Upper lobe of right lung (tissue), 1 donor: ENCODE measurements at regions of chr3 and their contacts with region 1.

Region 1: GRCh38 chr3:9384141-9384853 is 13.1 kb upstream of the SETD5 start:
- DNase-seq: no peak
- ATAC-seq: peak; percentile 28
- H3K4me3 ChIP-seq: no peak overlapping the region
- H3K27ac ChIP-seq: no peak overlapping the region
- H3K4me1 ChIP-seq: no peaks in the 10 kb centered on the region
- H3K27me3 ChIP-seq: no peaks in the 10 kb centered on the region
- CTCF ChIP-seq: no peak

Region 2: GRCh38 chr3:9428411-9428810 is 44.1 kb after region 1 on chr3:
- intact Hi-C with region 1: loop called (anchors 5 kb)
- DNase-seq: no peak
- ATAC-seq: no peak
- H3K4me3 ChIP-seq: no peak overlapping the region
- H3K27ac ChIP-seq: no peak overlapping the region
- H3K4me1 ChIP-seq: peaks cover 12% of the 10 kb centered on the region
- H3K27me3 ChIP-seq: no peaks in the 10 kb centered on the region
- CTCF ChIP-seq: no peak

Region 3: DNA sequence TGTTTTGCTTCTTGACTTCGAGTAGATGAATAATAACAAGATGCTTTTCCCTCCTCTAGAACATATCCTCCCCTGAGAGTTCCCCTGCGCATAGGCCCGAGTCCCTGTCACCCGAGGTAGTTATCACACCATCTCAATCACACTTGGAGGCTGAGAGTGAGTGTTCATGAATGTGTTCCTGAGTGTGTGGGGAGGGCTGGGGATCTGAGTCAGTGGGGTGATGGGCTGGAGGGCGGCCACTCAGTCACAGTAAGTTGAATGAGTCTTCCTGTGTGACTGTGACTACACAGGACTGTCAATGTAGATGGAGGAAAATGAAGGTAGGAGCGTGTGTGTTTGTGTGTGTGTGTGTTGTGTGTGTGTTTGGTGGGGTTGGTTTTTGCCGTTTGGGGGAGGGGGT is 84.2 kb after region 1 on chr3:
- intact Hi-C with region 1: loop called (anchors 10 kb)
- DNase-seq: no peak
- ATAC-seq: no peak
- H3K4me3 ChIP-seq: no peak overlapping the region
- H3K27ac ChIP-seq: no peak overlapping the region
- H3K4me1 ChIP-seq: no peaks in the 10 kb centered on the region
- H3K27me3 ChIP-seq: no peaks in the 10 kb centered on the region
- CTCF ChIP-seq: no peak